ENCODE measurements at regions of chr21 and their contacts with region 1.

Region 1: DNA sequence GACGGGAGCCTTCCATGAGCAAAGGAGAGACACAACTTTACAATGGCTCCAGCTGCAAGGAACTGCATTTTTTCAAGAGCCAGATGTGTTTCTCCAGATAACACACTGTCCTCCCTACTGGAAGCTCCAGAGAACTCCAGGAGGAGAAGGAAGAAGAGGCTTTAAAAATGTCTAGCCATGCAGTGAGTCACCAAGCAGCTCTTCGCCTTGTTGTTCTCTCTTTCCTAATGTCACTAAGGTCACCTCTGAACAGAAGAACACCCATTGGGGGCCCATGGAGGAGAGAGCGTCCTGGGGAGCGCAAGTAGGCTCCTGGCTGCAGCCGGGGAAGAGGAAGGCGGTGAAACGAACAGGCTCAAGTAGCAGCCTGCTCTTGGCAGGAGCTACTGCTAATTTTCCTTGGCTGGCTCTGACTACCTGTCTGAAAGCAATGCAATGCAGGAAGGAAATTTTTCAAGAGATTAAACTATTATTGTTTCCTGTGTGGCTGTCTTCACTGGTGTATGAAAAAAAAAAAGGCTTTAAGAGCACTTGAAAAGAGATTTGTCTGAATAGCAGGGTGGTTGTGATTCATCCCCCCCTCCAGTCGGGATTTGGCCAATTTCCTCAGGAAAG is 321.9 kb downstream of the SETD4 start:
- DNase-seq: peak; percentile 27
- ATAC-seq: peak; percentile 50
- H3K4me3 ChIP-seq: no peak overlapping the region
- H3K27ac ChIP-seq: peak overlapping the region; percentile 10; the same call in 1 of the 2 replicates
- H3K4me1 ChIP-seq: peaks cover 20% of the 10 kb centered on the region
- H3K27me3 ChIP-seq: no peaks in the 10 kb centered on the region
- CTCF ChIP-seq: no peak

Region 2: GRCh38 chr21:35593000-35593502 is 145.4 kb before region 1 on chr21:
- CTCF ChIA-PET with region 1: no interaction called
- POLR2A ChIA-PET with region 1: no interaction called
- intact Hi-C with region 1: no loop called
- DNase-seq: peak; percentile 42
- ATAC-seq: peak; percentile 64
- H3K4me3 ChIP-seq: no peak overlapping the region
- H3K27ac ChIP-seq: no peak overlapping the region
- H3K4me1 ChIP-seq: peaks cover 11% of the 10 kb centered on the region; the same call in 1 of the 2 replicates
- H3K27me3 ChIP-seq: no peaks in the 10 kb centered on the region
- CTCF ChIP-seq: no peak

Region 3: DNA sequence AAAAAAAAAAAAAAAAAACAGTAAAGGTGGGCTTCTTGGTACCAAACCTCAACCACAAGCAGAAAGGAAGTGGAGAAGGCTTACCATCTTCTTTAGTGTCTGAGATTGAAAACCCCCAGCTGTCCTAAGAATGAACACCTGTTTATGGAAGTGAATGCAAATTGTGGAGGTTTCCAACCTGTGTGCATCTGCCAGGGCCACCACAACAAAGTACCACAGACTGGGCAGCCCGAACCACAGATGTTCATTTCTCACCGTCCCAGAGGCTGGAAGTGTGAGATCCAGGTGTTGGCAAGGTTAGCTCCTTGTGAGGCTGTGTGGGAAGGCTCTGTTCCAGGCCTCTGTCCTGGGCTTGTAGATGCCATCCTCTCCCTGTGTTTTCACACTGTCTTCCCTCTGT is 26.8 kb before region 1 on chr21:
- CTCF ChIA-PET with region 1: no interaction called
- POLR2A ChIA-PET with region 1: no interaction called
- intact Hi-C with region 1: no loop called
- DNase-seq: no peak
- ATAC-seq: no peak
- H3K4me3 ChIP-seq: no peak overlapping the region
- H3K27ac ChIP-seq: no peak overlapping the region
- H3K4me1 ChIP-seq: no peaks in the 10 kb centered on the region
- H3K27me3 ChIP-seq: peaks cover 18% of the 10 kb centered on the region; the same call in 1 of the 2 replicates
- CTCF ChIP-seq: no peak

Region 4: GRCh38 chr21:35833991-35834390 is 95.5 kb after region 1 on chr21:
- CTCF ChIA-PET with region 1: no interaction called
- POLR2A ChIA-PET with region 1: no interaction called
- intact Hi-C with region 1: loop called (anchors 10 kb)
- DNase-seq: no peak
- ATAC-seq: no peak
- H3K4me3 ChIP-seq: no peak overlapping the region
- H3K27ac ChIP-seq: no peak overlapping the region
- H3K4me1 ChIP-seq: no peaks in the 10 kb centered on the region
- H3K27me3 ChIP-seq: no peaks in the 10 kb centered on the region
- CTCF ChIP-seq: no peak

Measured in PC-3 (cell line).